ENCODE measurements at regions of chr21 and their contacts with region 1.

Region 1: GRCh38 chr21:37009740-37010341 is 3.3 kb downstream of the RIPPLY3 start:
- DNase-seq: peak; percentile 49
- H3K4me3 ChIP-seq: peak overlapping the region; percentile 48
- H3K27ac ChIP-seq: no peak overlapping the region
- H3K27me3 ChIP-seq: peaks cover 33% of the 10 kb centered on the region
- CTCF ChIP-seq: peak; percentile 88

Region 2: DNA sequence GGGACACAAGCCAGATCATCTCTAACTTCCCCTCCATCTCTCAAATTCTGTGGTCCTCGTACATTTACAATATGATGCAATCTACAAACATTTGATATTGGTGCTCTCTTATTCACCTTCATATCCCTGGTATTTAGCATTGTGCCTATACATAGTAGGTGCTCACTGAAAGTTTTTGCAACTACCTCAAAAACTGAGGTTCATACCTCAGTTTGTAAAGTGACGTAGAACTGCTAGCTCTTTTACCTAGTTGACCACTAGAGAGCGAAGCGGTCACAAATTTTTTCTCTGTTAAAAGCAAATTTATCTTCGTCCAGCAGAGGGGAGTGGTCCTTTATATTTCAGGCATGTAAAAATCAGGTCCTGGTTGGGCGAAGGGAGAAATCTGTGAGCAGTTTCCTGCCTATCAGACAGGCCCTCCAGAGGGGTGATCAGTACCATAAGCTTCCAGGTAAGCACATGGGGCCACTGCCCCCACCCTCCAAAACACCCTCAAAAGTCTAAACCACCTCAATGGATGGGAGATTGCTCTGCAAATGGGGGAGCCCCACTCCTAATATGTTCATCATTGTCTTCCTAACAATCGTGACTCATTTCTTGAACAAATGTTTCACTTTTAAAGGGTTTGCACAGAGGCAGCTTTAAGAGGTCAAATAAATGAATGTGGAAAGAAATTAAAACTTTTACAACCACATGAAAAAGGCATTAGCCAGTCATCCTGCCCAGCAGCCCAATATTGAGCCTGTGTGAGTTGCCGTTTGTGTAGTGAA is 32.8 kb before region 1 on chr21:
- CTCF ChIA-PET with region 1: interaction called, 10 read pairs
- POLR2A ChIA-PET with region 1: no interaction called
- DNase-seq: peak; percentile 27
- H3K4me3 ChIP-seq: no peak overlapping the region
- H3K27ac ChIP-seq: no peak overlapping the region
- H3K27me3 ChIP-seq: no peaks in the 10 kb centered on the region
- CTCF ChIP-seq: peak; percentile 70

Region 3: DNA sequence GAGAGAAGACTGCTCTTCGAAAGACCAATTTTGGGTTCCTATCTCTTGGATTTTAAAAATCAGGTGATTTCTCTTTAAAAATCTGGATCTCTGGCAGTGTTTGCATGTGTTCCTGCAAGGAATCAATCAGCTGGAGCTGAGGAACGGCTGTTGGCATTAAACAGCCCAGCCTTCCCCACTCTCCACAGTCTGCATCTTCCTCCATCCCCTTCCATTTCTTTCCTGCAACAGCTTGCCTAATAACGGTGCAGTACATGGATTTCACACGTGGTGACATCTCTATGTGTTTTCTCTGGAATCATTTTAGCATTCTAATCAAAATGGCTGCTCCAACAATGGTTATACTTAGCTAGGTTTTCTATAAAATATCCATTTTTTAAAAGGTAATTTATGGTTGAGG is 16.7 kb after region 1 on chr21:
- CTCF ChIA-PET with region 1: interaction called, 14 read pairs
- POLR2A ChIA-PET with region 1: no interaction called
- DNase-seq: no peak
- H3K4me3 ChIP-seq: no peak overlapping the region
- H3K27ac ChIP-seq: no peak overlapping the region
- H3K27me3 ChIP-seq: peaks cover 13% of the 10 kb centered on the region
- CTCF ChIP-seq: no peak